ENCODE measurements at regions of chr6 and their contacts with region 1.

Region 1: GRCh38 chr6:15254070-15254841 is 8.4 kb downstream of the JARID2 start:
- DNase-seq: no peak
- H3K4me3 ChIP-seq: no peak overlapping the region
- CTCF ChIP-seq: no peak

Region 2: GRCh38 chr6:14210663-14211561 is 1043.3 kb before region 1 on chr6:
- in situ Hi-C with region 1: loop called (anchors 25 kb)
- DNase-seq: peak; percentile 63
- H3K4me3 ChIP-seq: peak overlapping the region; percentile 73
- CTCF ChIP-seq: peak; percentile 40

Region 3: GRCh38 chr6:15287670-15288375 is 33.6 kb after region 1 on chr6:
- in situ Hi-C with region 1: no loop called
- DNase-seq: no peak
- H3K4me3 ChIP-seq: no peak overlapping the region
- CTCF ChIP-seq: no peak

Region 4: DNA sequence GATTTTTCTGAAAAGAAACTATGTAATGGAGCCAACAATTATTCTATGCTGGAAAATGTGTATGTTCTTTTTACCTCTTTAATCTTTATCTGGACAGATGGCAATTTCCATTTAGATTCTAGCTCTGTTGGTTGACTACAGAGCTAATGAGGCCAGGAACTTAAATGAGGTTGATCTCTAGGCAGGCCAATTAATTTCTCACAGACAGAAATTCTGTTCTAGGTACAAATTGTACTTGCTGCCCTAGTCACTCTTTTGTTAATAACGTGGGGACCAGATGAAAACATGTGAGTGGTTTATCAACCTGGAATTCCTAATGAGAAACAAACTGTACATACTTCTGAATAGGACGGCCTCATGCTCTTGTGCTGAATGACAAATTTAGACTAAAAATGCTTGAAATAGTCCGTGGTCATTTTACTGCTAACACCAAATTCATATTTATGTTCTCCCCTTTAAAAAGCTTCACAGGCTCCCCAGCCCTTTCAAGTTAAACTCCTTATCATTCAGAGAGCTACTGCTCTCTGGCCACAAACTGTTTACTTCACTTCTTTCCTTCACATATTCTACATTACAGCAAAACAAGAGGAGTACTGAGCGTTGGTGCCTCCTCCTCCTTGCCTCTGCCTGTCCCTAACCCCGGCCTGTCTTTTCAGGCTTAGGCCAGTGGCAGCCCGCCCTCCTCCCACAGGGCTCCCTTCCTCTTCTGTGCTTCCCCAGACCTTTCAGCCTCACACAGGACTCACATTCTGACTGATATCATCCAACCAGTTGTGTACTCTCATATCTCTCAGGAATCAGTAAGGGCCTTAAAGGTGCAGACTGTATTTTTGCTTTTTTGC is 367.2 kb after region 1 on chr6:
- in situ Hi-C with region 1: loop called (anchors 25 kb)
- DNase-seq: no peak
- H3K4me3 ChIP-seq: no peak overlapping the region
- CTCF ChIP-seq: no peak

Measured in astrocyte of the cerebellum (primary cell).